ENCODE measurements at regions of chr11 and their contacts with region 1.

Region 1: DNA sequence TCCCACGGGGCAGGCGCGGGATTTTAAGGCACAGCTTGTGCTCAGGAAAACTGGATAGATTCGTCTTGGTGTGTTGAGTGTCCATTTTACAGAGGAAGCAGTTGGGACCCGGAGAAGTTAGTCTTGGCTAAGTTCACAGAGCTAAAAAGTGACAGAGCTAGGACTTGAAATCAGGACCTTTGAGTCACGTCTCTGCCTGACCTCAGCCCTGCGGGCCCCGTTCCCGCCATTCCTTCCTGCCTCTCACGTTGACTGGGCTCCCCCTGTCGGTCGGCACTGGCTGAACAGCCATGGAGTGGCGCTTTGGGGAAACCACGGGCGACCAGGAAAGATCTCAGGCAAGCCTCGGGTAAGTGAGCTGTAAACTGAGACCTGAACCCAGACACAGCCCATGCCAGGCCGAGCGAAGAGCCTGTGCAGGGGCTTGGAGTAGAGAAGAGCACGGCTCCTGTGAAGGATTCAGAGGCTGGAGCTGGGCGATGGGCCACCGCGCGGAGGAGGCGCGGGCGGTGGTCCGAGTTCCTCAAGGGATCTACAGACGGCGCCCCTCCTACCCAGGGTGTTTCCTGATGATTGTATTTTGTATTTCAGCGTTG is 54.1 kb downstream of the WNT11 start:
- DNase-seq: peak; percentile 66
- H3K4me3 ChIP-seq: peak overlapping the region in 2 of 3 experiments; percentile 35 to 40
- H3K27ac ChIP-seq: no peak overlapping the region
- H3K4me1 ChIP-seq: peaks cover 3% of the 10 kb centered on the region
- H3K27me3 ChIP-seq: no peaks in the 10 kb centered on the region
- CTCF ChIP-seq: peak; percentile 93 to 95

Region 2: DNA sequence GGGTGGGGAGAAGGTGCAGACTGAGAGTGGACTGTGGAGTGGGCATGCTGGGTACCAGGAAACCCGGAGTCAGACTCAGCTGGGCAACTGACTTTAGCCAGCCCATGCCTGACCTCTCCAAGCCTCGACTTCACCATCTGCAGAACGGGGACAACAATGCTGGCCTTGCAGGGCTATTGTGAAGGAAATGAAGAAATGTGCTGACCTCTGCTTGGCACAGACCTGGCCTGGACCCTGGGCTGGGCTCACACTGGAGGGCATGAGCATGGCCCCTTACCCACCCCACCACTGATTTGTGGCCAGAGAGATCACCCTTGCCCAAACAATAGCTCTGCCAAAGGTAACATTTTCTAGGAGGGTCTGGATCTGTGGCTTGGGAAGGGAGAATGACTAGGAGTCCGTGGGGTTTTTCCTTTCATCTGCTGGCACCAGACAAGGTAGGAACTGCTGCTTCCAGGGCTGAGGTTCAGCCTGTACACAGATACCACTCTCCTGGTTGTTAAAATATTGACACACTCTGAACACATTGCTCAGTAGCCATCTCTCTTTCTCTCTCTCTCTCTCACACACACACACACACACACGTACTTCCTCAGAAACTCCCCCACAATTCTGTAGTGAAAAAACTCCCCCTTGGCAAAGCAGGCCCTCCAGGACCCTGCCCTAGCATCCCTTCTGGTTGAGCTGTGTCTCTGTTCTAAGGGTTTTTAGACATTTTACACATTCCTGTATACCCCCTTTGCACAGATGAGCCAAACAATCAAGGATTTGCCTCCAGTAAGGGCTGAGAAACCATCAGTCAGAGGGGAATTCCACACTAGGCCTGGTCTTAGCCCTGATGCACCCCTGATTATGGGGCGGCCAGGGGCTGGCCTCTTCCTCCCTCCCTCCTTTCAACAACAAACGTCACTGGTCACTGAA is 433.5 kb before region 1 on chr11:
- CTCF ChIA-PET with region 1: no interaction called
- dilution Hi-C with region 1: no loop called
- in situ Hi-C with region 1: no loop called
- intact Hi-C with region 1: loop called (anchors 10 kb)
- DNase-seq: no peak
- H3K4me3 ChIP-seq: no peak overlapping the region
- H3K27ac ChIP-seq: no peak overlapping the region
- H3K4me1 ChIP-seq: peaks cover 4% of the 10 kb centered on the region
- H3K27me3 ChIP-seq: no peaks in the 10 kb centered on the region
- CTCF ChIP-seq: no peak

Region 3: DNA sequence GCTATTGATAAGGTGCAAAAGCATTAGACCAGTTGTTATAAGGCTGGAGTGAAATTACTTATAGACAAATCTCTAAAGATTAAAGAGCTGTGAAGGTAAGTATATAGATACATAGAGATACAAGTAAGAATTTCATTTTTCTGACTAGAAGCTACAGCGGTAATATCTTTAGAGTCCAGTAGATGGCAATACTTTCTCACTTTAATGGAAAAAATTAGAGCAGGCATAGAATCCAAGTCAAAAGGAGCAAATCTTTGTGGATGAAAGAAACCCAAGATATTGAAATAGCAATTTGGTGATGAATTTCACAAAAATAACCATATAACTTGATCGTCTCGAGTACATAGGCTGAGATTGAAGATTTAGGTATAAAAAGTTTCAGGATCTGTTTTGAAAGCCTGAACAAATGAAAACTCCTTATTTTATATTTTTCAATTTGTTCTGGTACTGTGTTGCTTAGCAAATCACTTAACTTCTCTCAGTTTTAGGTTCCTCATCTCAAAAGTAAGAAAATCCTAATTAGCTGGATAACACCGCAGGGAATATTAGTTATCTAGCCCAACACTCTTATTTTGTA is 255.3 kb before region 1 on chr11:
- CTCF ChIA-PET with region 1: interaction called, 5 read pairs
- dilution Hi-C with region 1: loop called (anchors 25 kb)
- in situ Hi-C with region 1: loop called (anchors 5 kb)
- intact Hi-C with region 1: loop called (anchors 1 kb)
- DNase-seq: peak; percentile 35
- H3K4me3 ChIP-seq: no peak overlapping the region
- H3K27ac ChIP-seq: no peak overlapping the region
- H3K4me1 ChIP-seq: no peaks in the 10 kb centered on the region
- H3K27me3 ChIP-seq: no peaks in the 10 kb centered on the region
- CTCF ChIP-seq: peak; percentile 59 to 60

Region 4: GRCh38 chr11:75924966-75925784 is 227.0 kb before region 1 on chr11:
- CTCF ChIA-PET with region 1: no interaction called
- dilution Hi-C with region 1: loop called (anchors 25 kb)
- in situ Hi-C with region 1: no loop called
- intact Hi-C with region 1: no loop called
- DNase-seq: peak; percentile 42
- H3K4me3 ChIP-seq: peak overlapping the region in 2 of 3 experiments; percentile 16 to 25
- H3K27ac ChIP-seq: peak overlapping the region; percentile 42
- H3K4me1 ChIP-seq: peaks cover 25% of the 10 kb centered on the region
- H3K27me3 ChIP-seq: no peaks in the 10 kb centered on the region
- CTCF ChIP-seq: no peak

Region 5: DNA sequence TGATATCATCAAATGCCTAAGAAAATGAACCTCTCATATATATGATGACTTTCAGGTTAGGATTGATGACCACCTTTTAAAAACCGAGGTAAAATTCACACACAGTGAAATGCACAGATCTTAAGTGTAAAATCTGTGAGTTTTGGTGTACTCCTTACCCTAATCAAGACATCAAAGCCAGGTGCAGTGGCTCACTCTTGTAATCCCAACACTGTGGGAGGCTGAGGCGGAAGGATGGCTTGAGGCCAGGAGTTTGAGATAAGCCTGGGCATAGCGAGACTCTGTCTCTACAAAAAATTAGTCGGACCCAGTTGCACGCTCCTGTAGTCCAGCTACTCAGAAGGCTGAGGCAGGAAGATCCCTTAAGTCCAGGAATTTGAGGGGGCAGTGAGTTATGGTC is 196.7 kb before region 1 on chr11:
- CTCF ChIA-PET with region 1: no interaction called
- dilution Hi-C with region 1: no loop called
- in situ Hi-C with region 1: no loop called
- intact Hi-C with region 1: no loop called
- DNase-seq: no peak
- H3K4me3 ChIP-seq: no peak overlapping the region
- H3K27ac ChIP-seq: no peak overlapping the region
- H3K4me1 ChIP-seq: no peaks in the 10 kb centered on the region
- H3K27me3 ChIP-seq: no peaks in the 10 kb centered on the region
- CTCF ChIP-seq: no peak

Region 6: GRCh38 chr11:76207642-76208401 is 55.6 kb after region 1 on chr11:
- CTCF ChIA-PET with region 1: no interaction called
- dilution Hi-C with region 1: no loop called
- in situ Hi-C with region 1: no loop called
- intact Hi-C with region 1: loop called (anchors 2 kb)
- DNase-seq: peak; percentile 68
- H3K4me3 ChIP-seq: peak overlapping the region; percentile 30 to 48 (median 35)
- H3K27ac ChIP-seq: no peak overlapping the region
- H3K4me1 ChIP-seq: peaks cover 40% of the 10 kb centered on the region
- H3K27me3 ChIP-seq: peaks cover 37% of the 10 kb centered on the region
- CTCF ChIP-seq: peak; percentile 83 to 95